Cardiac septum (tissue), 1 donor: ENCODE measurements at regions of chr2 and their contacts with region 1.

Region 1: GRCh38 chr2:144937910-144938709 is 418.2 kb upstream of the ZEB2 start:
- DNase-seq: no peak

Region 2: DNA sequence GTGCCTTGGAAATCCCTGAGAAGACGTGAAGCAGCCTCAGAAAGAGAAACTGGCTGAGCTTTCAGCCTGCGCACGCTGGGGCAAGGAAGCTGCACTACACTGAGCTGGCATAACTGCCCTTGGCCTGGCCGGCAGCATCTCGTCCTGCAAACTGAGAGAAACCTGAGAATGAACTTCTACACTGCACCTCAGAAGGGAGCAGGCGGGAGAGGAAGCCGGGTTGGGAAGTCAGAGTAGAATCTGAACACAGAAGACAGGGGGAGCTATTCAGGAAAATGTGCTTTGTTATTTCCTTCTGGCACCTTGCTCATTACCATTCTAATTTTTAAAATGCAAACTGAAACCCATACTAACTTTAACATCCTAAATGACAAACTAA is 489.1 kb before region 1 on chr2:
- intact Hi-C with region 1: no loop called
- DNase-seq: no peak

Region 3: DNA sequence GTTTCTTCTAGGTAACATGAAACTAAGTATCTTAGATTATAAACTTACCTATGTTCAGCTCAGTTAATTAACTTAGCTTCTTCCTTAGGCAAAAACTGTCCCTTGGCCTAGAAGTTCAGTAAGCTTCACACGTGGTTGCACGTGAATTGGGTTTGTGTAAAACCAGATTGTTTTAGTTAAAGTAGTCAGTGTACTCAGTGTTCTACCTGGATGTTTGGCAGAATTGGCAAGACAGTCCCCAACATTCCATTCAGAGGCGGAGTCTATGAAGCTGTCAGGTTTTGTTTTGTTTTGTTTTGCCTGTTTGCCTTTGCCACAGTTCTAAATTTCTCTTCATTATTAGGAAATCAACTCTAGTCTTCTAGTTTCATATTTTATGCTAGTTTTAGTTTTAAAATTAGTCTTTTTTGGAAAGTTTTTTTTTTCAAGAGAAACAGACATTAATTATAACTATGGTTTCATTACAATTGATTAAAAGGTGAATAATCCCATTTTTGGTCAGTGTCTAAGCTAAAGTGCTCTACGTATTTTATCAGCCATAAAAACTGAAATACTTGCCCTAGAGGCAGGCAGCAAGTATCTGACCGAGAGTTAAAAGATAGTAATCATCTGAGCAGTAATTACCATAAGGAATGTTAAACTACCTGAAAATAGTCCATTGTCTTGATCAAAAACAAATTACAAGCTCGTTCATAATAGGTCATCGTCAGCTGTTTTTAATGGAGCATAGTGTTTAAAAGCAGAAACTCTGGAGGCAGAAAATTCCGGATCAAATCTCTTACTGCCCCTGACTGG is 312.7 kb before region 1 on chr2:
- intact Hi-C with region 1: no loop called
- DNase-seq: no peak

Region 4: GRCh38 chr2:144712550-144712940 is 225.6 kb before region 1 on chr2:
- intact Hi-C with region 1: loop called (anchors 10 kb)
- DNase-seq: no peak

Region 5: DNA sequence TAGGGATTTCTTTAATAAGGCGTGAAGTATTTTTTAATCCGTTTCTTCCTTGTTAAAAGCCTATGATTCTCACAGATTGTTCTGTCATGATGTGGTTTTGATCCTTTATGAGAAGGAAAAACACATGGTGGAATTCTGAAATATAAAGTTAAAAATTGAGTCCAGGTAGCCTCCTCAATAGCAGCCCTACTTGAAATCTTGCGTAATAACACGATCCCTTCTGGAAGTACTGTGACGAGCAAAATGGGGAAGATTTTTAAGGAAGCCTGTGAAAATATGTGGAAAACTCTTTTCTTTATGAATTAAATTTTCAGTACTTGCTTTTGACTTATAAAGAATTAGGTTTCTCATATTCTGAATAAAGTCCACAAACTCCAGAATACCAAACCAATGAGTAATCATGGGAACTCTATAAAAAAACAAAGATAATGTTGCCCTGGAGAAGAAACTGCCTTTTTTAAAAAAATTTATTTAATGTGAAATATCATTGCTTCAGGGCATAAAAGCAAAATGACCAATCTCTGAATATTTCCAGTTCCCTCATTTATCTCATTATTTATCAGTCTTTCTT is 58.2 kb after region 1 on chr2:
- intact Hi-C with region 1: loop called (anchors 5 kb)
- DNase-seq: no peak

Region 6: DNA sequence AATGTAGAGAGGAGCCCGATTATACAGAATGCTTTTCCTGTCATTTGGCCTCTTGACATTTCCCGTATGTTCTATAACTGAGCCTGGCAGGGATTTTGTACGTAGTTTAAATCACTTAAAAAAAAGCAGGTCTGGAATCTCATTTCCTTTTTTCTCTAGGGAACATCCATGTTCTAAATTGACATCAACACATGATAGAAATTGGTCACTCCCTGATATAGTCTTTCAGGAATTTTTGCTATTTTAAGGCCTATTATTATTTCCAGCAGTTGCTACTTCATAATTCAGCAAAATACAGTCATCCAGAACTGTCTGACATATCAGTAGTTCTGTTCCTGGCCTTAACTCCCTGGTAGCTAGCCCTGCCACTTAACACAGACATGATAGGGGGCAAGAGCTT is 147.5 kb after region 1 on chr2:
- intact Hi-C with region 1: loop called (anchors 10 kb)
- DNase-seq: no peak